Cardiac septum (tissue), 1 donor: ENCODE measurements at regions of chr4 and their contacts with region 1.

Region 1: GRCh38 chr4:106695501-106696262 is 327.1 kb upstream of the GIMD1 start:
- DNase-seq: no peak

Region 2: GRCh38 chr4:106676173-106676921 is 19.3 kb before region 1 on chr4:
- intact Hi-C with region 1: loop called (anchors 1 kb)
- DNase-seq: no peak